ENCODE measurements at regions of chr15 and their contacts with region 1.

Region 1: GRCh38 chr15:59528965-59529402 is 82.6 kb upstream of the GCNT3 start:
- DNase-seq: peak; percentile 74
- H3K4me3 Mint-ChIP-seq: no peak overlapping the region
- H3K27ac Mint-ChIP-seq: no peak overlapping the region
- H3K4me1 Mint-ChIP-seq: peaks cover 14% of the 10 kb centered on the region
- H3K27me3 Mint-ChIP-seq: peaks cover 25% of the 10 kb centered on the region

Region 2: GRCh38 chr15:58980351-58980939 is 548.5 kb before region 1 on chr15:
- CTCF ChIA-PET with region 1: interaction called, 10 read pairs
- POLR2A ChIA-PET with region 1: interaction called, 3 read pairs
- DNase-seq: no peak
- H3K4me3 Mint-ChIP-seq: no peak overlapping the region
- H3K27ac Mint-ChIP-seq: peak overlapping the region; percentile 8
- H3K4me1 Mint-ChIP-seq: peaks cover 46% of the 10 kb centered on the region
- H3K27me3 Mint-ChIP-seq: peaks cover 9% of the 10 kb centered on the region

Region 3: GRCh38 chr15:59174835-59175831 is 353.9 kb before region 1 on chr15:
- CTCF ChIA-PET with region 1: interaction called, 10 read pairs
- POLR2A ChIA-PET with region 1: no interaction called
- DNase-seq: peak; percentile 59
- H3K4me3 Mint-ChIP-seq: no peak overlapping the region
- H3K27ac Mint-ChIP-seq: no peak overlapping the region
- H3K4me1 Mint-ChIP-seq: peaks cover 18% of the 10 kb centered on the region
- H3K27me3 Mint-ChIP-seq: peaks cover 7% of the 10 kb centered on the region

Region 4: GRCh38 chr15:59221511-59222505 is 307.2 kb before region 1 on chr15:
- CTCF ChIA-PET with region 1: no interaction called
- POLR2A ChIA-PET with region 1: no interaction called
- DNase-seq: no peak
- H3K4me3 Mint-ChIP-seq: no peak overlapping the region
- H3K27ac Mint-ChIP-seq: no peak overlapping the region
- H3K4me1 Mint-ChIP-seq: peaks cover 11% of the 10 kb centered on the region
- H3K27me3 Mint-ChIP-seq: peaks cover 7% of the 10 kb centered on the region

Region 5: DNA sequence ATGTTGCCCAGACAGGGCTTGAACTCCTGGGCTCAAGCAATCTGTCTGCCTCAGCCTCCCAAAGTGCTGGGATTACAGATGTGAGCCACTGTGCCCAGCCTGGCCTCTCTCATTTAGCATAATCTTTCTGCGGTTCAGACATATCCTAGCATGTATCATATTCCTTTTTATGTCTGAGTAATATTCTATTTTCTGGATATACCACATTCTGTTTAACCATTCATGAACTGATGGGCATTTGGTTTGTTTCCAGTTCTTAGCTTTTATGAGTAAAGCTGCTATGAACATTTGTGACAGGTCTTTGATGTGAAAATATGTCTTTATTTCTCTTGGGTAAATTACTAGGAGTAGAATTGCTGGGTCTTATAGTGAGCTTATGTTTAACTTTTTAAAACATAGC is 67.5 kb before region 1 on chr15:
- CTCF ChIA-PET with region 1: no interaction called
- POLR2A ChIA-PET with region 1: no interaction called
- DNase-seq: no peak
- H3K4me3 Mint-ChIP-seq: no peak overlapping the region
- H3K27ac Mint-ChIP-seq: no peak overlapping the region
- H3K4me1 Mint-ChIP-seq: no peaks in the 10 kb centered on the region
- H3K27me3 Mint-ChIP-seq: peaks cover 41% of the 10 kb centered on the region

Region 6: DNA sequence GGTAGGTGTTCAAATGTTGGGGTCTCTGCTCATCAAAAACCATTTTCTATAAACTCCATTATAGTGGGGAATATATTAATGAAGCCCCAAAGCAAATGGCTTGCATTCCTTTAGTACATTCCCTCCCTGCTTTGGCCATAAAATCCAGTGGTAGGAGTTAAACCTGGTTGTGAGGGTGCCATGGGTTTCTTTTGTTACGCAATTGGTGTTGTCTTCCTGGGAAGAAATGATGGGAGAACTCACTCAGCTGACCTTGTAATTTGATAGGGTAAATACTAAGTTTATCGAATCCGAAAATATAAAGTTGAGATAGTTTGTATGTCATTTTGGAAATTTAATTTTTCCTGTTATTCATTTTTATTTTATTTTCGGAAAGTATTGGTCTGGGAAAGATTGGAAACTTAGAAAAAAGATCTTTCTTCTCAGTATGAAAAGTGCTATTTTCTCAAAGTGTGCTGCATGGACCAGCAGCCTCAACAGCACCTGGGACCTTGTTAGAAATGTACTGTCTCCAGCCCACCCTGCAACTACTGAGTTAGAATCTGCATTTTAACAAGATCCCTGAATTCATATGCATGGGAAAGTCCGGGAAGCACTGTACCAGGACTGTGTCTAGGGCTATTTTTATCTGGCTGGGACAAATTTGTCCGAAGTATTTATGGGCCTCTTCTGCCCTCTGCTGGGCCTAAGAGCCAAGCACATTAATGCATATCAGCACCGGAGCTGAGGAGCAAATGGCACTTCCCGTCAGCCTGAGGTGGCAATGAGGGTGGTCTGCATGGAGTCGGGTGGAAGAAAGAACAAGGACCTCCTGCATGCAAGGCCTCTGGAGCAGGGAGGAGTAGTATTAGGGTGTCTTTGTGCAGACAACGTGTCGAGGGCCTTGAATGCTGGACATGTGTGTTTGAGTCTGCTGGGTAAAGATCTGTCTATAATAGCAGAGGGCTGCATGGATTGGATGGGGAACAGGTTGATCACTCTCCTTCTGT is 36.3 kb before region 1 on chr15:
- CTCF ChIA-PET with region 1: interaction called, 10 read pairs
- POLR2A ChIA-PET with region 1: interaction called, 3 read pairs
- DNase-seq: peak; percentile 61
- H3K4me3 Mint-ChIP-seq: no peak overlapping the region
- H3K27ac Mint-ChIP-seq: no peak overlapping the region
- H3K4me1 Mint-ChIP-seq: peaks cover 1% of the 10 kb centered on the region
- H3K27me3 Mint-ChIP-seq: peaks cover 20% of the 10 kb centered on the region

Region 7: GRCh38 chr15:59516655-59517461 is 12.1 kb before region 1 on chr15:
- CTCF ChIA-PET with region 1: interaction called, 40 read pairs
- POLR2A ChIA-PET with region 1: no interaction called
- DNase-seq: no peak
- H3K4me3 Mint-ChIP-seq: no peak overlapping the region
- H3K27ac Mint-ChIP-seq: no peak overlapping the region
- H3K4me1 Mint-ChIP-seq: no peaks in the 10 kb centered on the region
- H3K27me3 Mint-ChIP-seq: peaks cover 19% of the 10 kb centered on the region

Region 8: GRCh38 chr15:59587068-59587826 is 58.3 kb after region 1 on chr15:
- CTCF ChIA-PET with region 1: interaction called, 18 read pairs
- POLR2A ChIA-PET with region 1: no interaction called
- DNase-seq: no peak
- H3K4me3 Mint-ChIP-seq: no peak overlapping the region
- H3K27ac Mint-ChIP-seq: no peak overlapping the region
- H3K4me1 Mint-ChIP-seq: peaks cover 32% of the 10 kb centered on the region
- H3K27me3 Mint-ChIP-seq: no peaks in the 10 kb centered on the region

Region 9: GRCh38 chr15:59622289-59622688 is 93.3 kb after region 1 on chr15:
- CTCF ChIA-PET with region 1: interaction called, 23 read pairs
- POLR2A ChIA-PET with region 1: no interaction called
- DNase-seq: peak; percentile 64
- H3K4me3 Mint-ChIP-seq: no peak overlapping the region
- H3K27ac Mint-ChIP-seq: no peak overlapping the region
- H3K4me1 Mint-ChIP-seq: no peaks in the 10 kb centered on the region
- H3K27me3 Mint-ChIP-seq: peaks cover 24% of the 10 kb centered on the region

Region 10: DNA sequence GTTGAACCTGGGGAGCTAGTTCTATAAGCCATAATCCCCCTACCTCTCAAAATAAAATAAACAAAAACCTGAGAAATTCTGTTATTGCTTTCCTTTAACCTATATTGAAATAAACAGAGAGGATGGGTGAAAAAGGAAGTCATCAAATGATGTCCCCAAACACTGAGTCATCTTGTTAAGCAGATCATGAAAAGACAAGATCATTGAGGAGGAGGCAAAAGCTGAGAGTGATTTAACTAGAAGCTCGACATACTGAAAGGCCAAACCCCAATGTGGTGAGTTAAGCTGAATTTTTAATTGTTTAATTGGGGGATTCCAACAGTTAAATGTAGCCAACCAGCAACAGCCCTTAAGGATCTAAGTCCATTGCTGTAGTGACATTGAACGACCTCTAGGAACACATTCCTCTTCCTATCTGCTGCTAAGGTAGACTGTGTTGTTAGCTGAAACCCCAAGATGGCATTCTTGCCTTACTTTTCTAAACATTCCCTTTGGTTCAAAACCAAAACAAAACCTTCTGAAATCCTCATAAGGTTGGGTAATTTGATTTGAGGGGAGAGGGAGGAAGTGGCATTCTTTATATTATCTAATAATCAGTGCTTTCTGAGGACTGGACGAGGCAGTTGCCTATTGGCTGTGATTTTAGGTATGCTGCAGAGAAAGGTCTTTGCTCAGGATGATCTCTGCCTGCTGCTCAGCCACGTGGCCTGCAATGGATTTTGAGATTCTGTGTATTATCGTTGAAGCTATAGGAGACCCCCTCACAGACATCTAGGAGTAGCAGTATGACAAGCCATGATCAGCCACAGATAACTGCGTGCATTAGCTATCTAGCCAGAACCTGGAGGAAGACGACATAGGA is 222.8 kb after region 1 on chr15:
- CTCF ChIA-PET with region 1: no interaction called
- POLR2A ChIA-PET with region 1: no interaction called
- DNase-seq: no peak
- H3K4me3 Mint-ChIP-seq: no peak overlapping the region
- H3K27ac Mint-ChIP-seq: no peak overlapping the region
- H3K4me1 Mint-ChIP-seq: peaks cover 12% of the 10 kb centered on the region
- H3K27me3 Mint-ChIP-seq: peaks cover 9% of the 10 kb centered on the region

Measured in activated CD4-positive, alpha-beta memory T cell treated with anti-CD3 and anti-CD28 coated beads, Interleukin-2, amount 10 ng/mL, durations not matched to agents 7 days and 5 days (primary cell).